ENCODE measurements at regions of chr2 and their contacts with region 1.

Region 1: DNA sequence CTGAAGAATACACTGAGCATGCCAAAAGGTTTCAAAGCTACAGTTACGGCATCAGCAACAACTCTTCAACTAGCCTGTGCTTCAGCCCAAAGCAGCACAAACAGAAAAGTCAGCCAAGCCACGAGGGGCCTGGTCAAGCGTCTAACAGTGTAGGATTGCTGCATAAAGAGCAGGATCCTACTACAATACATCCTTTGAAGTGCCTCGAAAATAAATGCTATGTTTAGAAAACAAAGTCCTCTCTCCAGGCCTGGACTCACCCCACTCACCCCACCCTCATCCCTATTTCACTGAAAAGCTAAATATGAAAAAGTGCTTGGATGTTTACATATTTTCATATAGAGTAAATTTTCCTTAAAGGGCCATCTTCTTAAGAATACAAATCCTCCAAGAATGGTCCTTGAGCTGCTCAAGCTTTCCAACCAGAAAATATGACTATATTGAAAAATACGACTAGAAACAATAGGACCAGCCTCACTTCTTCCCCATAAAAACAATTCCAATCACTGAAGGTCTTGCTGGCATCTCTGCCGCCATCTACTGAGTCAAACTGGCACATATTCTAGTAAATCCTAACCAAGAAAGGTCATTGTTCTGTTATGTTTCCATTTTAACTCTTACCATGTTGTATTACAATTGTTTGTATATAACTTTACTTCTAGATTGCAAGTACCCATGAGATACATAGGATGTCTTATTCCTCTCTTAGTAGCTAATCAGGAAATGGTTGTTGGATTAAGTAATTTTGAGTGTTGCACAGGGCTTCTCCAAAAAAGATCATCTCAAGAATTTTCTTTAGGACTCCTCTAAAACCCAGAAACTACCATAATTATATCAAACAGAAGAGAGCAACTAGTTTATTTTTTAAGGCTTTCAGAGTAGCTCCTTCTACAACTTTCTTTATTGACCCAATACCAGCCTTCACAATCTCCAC is 63.6 kb downstream of the CLHC1 start:
- DNase-seq: peak; percentile 37 to 50 (median 41)
- H3K4me3 ChIP-seq: no peak overlapping the region
- H3K4me3 Mint-ChIP-seq: no peak overlapping the region
- H3K27ac ChIP-seq: no peak overlapping the region
- H3K27ac Mint-ChIP-seq: peak overlapping the region in 1 of 7 donors; percentile 0
- H3K4me1 ChIP-seq: no peaks in the 10 kb centered on the region
- H3K4me1 Mint-ChIP-seq: peaks cover 0 to 3% (median 1%) of the 10 kb centered on the region in 4 donors
- H3K27me3 ChIP-seq: no peaks in the 10 kb centered on the region
- H3K27me3 Mint-ChIP-seq: no peaks in the 10 kb centered on the region

Region 2: DNA sequence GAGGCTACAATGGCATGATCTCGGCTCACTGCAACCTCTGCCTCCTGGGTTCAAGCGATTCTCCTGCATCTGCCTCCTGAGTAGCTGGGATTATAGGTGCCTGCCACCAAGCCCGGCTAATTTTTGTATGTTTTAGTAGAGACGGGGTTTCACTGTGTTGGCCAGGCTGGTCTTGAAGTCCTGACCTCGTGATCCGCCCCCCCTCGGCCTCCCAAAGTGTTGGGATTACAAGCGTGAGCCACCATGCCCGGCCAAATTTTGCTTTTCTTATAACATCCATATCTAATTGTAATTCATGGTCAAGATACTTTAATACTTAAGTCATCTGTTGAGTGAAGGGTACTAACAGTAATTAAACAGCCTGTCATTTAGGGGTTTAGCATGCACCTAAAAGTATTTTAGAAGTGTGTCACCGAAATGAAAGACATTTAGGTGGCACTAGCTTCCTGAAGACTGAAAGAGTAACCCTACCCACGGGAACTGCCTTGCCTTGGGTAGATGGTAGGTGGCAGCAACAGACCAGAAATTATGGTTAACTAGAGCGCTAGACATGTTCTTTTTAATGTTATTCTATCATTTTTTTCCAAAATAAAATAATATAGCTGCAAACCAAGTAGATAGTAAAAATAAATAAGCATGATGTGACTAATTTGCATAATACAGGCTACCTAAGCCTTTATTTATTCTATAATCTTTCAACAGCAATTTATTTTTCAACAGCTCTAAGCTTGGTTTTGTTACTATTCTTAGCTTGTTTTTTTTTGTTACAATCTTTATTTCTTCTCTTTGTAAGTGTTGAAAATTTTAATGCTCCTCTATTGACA is 1061.6 kb before region 1 on chr2:
- CTCF ChIA-PET with region 1: interaction called, 4 read pairs
- POLR2A ChIA-PET with region 1: no interaction called
- intact Hi-C with region 1: loop called (anchors 5 kb)
- DNase-seq: peak; percentile 39 to 56 (median 54)
- H3K4me3 ChIP-seq: no peak overlapping the region
- H3K4me3 Mint-ChIP-seq: no peak overlapping the region
- H3K27ac ChIP-seq: no peak overlapping the region
- H3K27ac Mint-ChIP-seq: peak overlapping the region in 1 of 7 donors; percentile 68
- H3K4me1 ChIP-seq: peaks cover 13% of the 10 kb centered on the region
- H3K4me1 Mint-ChIP-seq: peaks cover 8 to 12% (median 9%) of the 10 kb centered on the region in 4 donors
- H3K27me3 ChIP-seq: no peaks in the 10 kb centered on the region
- H3K27me3 Mint-ChIP-seq: no peaks in the 10 kb centered on the region

Region 3: DNA sequence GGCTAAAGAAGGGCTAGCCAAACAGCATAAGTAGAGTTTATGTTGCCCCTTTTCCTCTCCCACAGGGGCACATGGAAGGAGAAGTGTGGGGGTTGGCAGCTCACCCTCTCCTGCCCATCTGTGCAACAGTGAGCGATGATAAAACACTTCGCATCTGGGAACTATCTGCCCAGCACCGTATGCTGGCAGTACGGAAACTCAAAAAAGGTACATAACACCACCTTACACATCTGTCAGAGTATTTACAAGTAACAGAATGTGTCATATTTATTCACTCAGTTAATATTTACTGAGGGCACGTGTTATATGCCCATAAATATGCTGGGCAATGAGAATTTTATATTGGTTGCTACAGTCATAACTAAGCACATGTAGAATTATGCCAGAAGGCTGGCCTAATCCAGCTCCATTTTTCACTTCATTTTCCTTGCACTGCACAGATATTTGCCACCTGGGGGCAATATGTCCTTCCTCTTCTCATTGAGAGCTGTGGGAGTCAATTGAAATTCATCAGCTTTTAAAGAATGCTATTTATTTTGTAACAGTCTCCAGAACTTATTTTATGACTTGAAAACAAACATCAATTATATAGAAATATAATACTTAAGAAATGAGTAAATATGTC is 268.8 kb before region 1 on chr2:
- CTCF ChIA-PET with region 1: interaction called, 84 read pairs
- POLR2A ChIA-PET with region 1: no interaction called
- intact Hi-C with region 1: loop called (anchors 1 kb)
- DNase-seq: peak in 4 of 5 donors; percentile 11 to 25 (median 16)
- H3K4me3 ChIP-seq: no peak overlapping the region
- H3K4me3 Mint-ChIP-seq: no peak overlapping the region
- H3K27ac ChIP-seq: no peak overlapping the region
- H3K27ac Mint-ChIP-seq: no peak overlapping the region
- H3K4me1 ChIP-seq: peaks cover 27% of the 10 kb centered on the region
- H3K4me1 Mint-ChIP-seq: peaks cover 20 to 26% (median 23%) of the 10 kb centered on the region in 4 donors
- H3K27me3 ChIP-seq: no peaks in the 10 kb centered on the region
- H3K27me3 Mint-ChIP-seq: no peaks in the 10 kb centered on the region

Region 4: GRCh38 chr2:55010149-55010591 is 158.3 kb before region 1 on chr2:
- CTCF ChIA-PET with region 1: interaction called, 177 read pairs
- POLR2A ChIA-PET with region 1: interaction called, 4 read pairs
- intact Hi-C with region 1: loop called (anchors 1 kb)
- DNase-seq: peak; percentile 50 to 82 (median 71)
- H3K4me3 ChIP-seq: peak overlapping the region; percentile 9 to 44
- H3K4me3 Mint-ChIP-seq: peak overlapping the region; percentile 83 to 97 (median 93)
- H3K27ac ChIP-seq: peak overlapping the region; percentile 44
- H3K27ac Mint-ChIP-seq: peak overlapping the region; percentile 80 to 98 (median 94)
- H3K4me1 ChIP-seq: peaks cover 80% of the 10 kb centered on the region
- H3K4me1 Mint-ChIP-seq: peaks cover 45 to 73% (median 60%) of the 10 kb centered on the region in 4 donors
- H3K27me3 ChIP-seq: no peaks in the 10 kb centered on the region
- H3K27me3 Mint-ChIP-seq: no peaks in the 10 kb centered on the region

Region 5: GRCh38 chr2:55033066-55033742 is 135.3 kb before region 1 on chr2:
- CTCF ChIA-PET with region 1: interaction called, 10 read pairs
- POLR2A ChIA-PET with region 1: interaction called, 3 read pairs
- intact Hi-C with region 1: no loop called
- DNase-seq: no peak
- H3K4me3 ChIP-seq: no peak overlapping the region
- H3K4me3 Mint-ChIP-seq: peak overlapping the region in 2 of 8 donors; percentile 34 to 37
- H3K27ac ChIP-seq: no peak overlapping the region
- H3K27ac Mint-ChIP-seq: peak overlapping the region in 4 of 7 donors; percentile 13 to 43 (median 30)
- H3K4me1 ChIP-seq: peaks cover 68% of the 10 kb centered on the region
- H3K4me1 Mint-ChIP-seq: peaks cover 56 to 67% (median 61%) of the 10 kb centered on the region in 4 donors
- H3K27me3 ChIP-seq: no peaks in the 10 kb centered on the region
- H3K27me3 Mint-ChIP-seq: no peaks in the 10 kb centered on the region

Region 6: DNA sequence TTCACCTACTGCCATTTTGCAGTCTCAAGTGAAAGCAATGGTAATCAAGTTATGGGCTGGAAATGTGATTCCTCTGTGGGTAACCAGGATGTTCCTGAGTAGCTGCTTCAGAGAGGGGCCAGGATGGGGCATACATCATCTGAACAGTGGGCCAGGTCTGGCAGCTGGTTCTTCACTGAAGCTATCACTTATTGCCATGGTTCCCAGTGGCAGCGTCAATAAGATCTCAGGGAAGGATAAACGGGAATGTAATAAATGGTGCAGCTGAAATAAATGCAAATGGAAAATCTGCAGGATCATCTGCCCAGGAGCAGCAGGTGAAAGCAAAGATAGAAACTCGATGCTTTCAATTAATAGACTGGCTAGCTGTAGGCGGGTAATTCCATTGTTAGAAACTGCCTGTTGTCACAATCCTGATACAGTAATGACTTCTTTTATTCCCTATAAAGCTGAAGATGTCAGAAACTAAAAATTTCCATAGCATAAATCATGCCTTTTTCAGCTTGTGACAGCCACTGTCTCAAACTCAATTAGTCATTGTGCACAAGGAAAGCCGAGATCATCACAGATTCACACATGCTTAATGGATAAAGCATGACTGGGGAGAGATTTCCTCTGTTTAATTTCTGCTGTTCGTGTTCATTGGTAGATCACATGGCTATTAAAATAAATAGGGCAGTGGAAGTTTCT is 959.1 kb after region 1 on chr2:
- CTCF ChIA-PET with region 1: no interaction called
- POLR2A ChIA-PET with region 1: no interaction called
- intact Hi-C with region 1: no loop called
- DNase-seq: no peak
- H3K4me3 ChIP-seq: no peak overlapping the region
- H3K4me3 Mint-ChIP-seq: no peak overlapping the region
- H3K27ac ChIP-seq: no peak overlapping the region
- H3K27ac Mint-ChIP-seq: no peak overlapping the region
- H3K4me1 ChIP-seq: no peaks in the 10 kb centered on the region
- H3K4me1 Mint-ChIP-seq: peaks cover 0 to 2% (median 0%) of the 10 kb centered on the region in 4 donors
- H3K27me3 ChIP-seq: no peaks in the 10 kb centered on the region
- H3K27me3 Mint-ChIP-seq: peaks cover 0 to 3% of the 10 kb centered on the region in 2 donors

Measured in CD4-positive, alpha-beta memory T cell (primary cell).